ENCODE measurements at regions of chr1 and their contacts with region 1.

Region 1: GRCh38 chr1:37859507-37860345 is at the start of gene MTF1:
- DNase-seq: peak; percentile 100
- CTCF ChIP-seq: peak; percentile 89

Region 2: GRCh38 chr1:37064039-37064438 is 795.7 kb before region 1 on chr1:
- CTCF ChIA-PET with region 1: no interaction called
- POLR2A ChIA-PET with region 1: no interaction called
- DNase-seq: no peak
- CTCF ChIP-seq: no peak

Region 3: DNA sequence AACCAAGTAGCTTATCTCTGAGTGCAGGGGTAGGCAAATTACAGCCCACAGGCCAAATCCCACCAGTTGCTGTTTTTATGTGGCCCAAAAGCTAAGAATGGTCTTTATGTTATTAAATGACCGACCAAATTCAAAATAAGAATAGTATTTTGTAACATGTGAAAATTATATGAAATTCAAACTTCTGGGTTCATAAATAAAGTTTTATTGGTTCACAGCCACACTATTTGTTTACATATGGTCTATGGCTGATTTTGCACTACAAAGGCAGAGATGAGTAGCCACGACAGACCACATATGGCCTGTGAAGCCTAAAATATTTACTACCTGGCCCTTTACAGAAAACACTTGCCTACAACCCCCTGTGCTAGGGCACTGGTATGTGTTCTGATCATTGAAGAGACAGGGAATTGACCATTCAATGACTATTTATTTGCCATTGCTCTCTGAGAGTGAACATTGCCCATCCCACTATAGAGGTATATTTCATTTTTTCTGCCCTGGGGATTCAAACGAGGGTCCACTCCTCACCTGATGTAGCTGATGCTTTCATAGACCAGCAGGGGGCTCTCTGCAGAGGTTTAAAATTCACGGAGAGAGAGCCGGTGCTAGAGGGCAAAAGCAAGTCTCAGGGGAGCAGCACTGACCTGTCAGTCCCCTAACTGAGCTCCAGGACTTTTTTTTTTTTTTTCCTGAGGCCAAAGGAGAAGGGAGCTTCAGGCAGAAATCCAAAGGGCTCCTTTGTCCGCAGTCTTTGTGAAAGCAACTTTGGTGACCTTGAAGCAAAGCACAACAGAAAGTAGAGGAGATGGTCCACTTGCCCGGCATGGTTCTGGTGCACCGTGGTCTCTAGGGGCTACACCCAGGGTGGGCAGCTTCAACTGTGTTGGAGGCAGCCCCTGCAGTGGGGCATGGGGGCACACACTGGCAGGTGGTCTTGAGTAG is 256.7 kb before region 1 on chr1:
- CTCF ChIA-PET with region 1: interaction called, 13 read pairs
- POLR2A ChIA-PET with region 1: no interaction called
- DNase-seq: peak; percentile 72
- CTCF ChIP-seq: peak; percentile 61

Region 4: GRCh38 chr1:37817481-37817880 is 42.2 kb before region 1 on chr1:
- CTCF ChIA-PET with region 1: interaction called, 46 read pairs
- POLR2A ChIA-PET with region 1: no interaction called
- DNase-seq: no peak
- CTCF ChIP-seq: no peak

Region 5: DNA sequence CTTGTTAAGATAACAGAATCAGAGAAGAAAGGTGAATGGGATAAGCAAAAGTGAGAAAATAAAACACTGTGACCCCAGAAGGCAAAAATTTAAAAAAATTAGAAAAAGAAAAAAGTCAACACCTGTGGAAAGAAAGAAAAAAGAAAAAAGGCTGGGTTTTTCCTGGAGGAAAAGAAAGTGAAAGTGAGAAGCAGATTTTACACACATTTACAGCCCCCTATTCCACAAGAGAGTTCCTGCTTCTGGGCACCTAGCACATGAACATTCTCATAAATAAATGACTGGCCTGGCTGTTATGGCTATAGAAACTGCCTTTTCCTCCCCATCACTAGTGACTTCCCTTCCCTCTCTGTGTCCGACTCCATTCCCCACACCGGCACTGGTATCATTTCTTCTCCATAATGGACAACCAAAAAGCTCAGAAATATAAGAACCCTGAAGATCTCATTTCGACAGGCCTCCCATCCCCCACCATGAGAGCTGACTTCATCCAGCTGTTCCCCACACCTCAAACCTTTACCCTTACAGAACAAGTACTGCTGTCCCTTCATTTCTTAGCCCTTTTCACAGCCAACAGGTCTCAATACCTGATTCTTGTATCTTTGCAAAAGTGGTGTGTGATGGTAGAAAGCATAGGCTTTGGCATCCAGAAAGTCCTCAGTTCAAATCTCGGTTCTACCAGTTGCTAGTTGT is 12.9 kb before region 1 on chr1:
- CTCF ChIA-PET with region 1: interaction called, 51 read pairs
- POLR2A ChIA-PET with region 1: interaction called, 3 read pairs
- DNase-seq: no peak
- CTCF ChIP-seq: no peak

Region 6: GRCh38 chr1:37888022-37888700 is 28.4 kb after region 1 on chr1:
- CTCF ChIA-PET with region 1: interaction called, 10 read pairs
- POLR2A ChIA-PET with region 1: no interaction called
- DNase-seq: no peak
- CTCF ChIP-seq: no peak

Measured in GM10248 (cell line).